CD4-positive, alpha-beta memory T cell (primary cell): ENCODE measurements at regions of chr22 and their contacts with region 1.

Region 1: GRCh38 chr22:20523086-20523983 is 15.9 kb downstream of the MED15 start:
- DNase-seq: peak; percentile 11 to 50 (median 22)
- H3K4me3 ChIP-seq: no peak overlapping the region
- H3K4me3 Mint-ChIP-seq: peak overlapping the region in 7 of 8 donors; percentile 50 to 87 (median 71)
- H3K27ac ChIP-seq: peak overlapping the region; percentile 11
- H3K27ac Mint-ChIP-seq: peak overlapping the region; percentile 77 to 97 (median 93)
- H3K4me1 ChIP-seq: peaks cover 75% of the 10 kb centered on the region
- H3K4me1 Mint-ChIP-seq: peaks cover 48 to 80% (median 64%) of the 10 kb centered on the region in 4 donors
- H3K27me3 ChIP-seq: no peaks in the 10 kb centered on the region
- H3K27me3 Mint-ChIP-seq: no peaks in the 10 kb centered on the region

Region 2: GRCh38 chr22:20130739-20131596 is 392.4 kb before region 1 on chr22:
- CTCF ChIA-PET with region 1: no interaction called
- POLR2A ChIA-PET with region 1: no interaction called
- intact Hi-C with region 1: no loop called
- DNase-seq: peak; percentile 72 to 79 (median 75)
- H3K4me3 ChIP-seq: peak overlapping the region; percentile 21 to 57
- H3K4me3 Mint-ChIP-seq: peak overlapping the region; percentile 41 to 76 (median 53)
- H3K27ac ChIP-seq: peak overlapping the region; percentile 79
- H3K27ac Mint-ChIP-seq: peak overlapping the region; percentile 31 to 88 (median 73)
- H3K4me1 ChIP-seq: peaks cover 48% of the 10 kb centered on the region
- H3K4me1 Mint-ChIP-seq: peaks cover 9 to 48% (median 35%) of the 10 kb centered on the region in 4 donors
- H3K27me3 ChIP-seq: no peaks in the 10 kb centered on the region
- H3K27me3 Mint-ChIP-seq: no peaks in the 10 kb centered on the region

Region 3: GRCh38 chr22:20405931-20406685 is 117.2 kb before region 1 on chr22:
- CTCF ChIA-PET with region 1: no interaction called
- POLR2A ChIA-PET with region 1: no interaction called
- intact Hi-C with region 1: no loop called
- DNase-seq: no peak
- H3K4me3 ChIP-seq: no peak overlapping the region
- H3K4me3 Mint-ChIP-seq: no peak overlapping the region
- H3K27ac ChIP-seq: no peak overlapping the region
- H3K27ac Mint-ChIP-seq: no peak overlapping the region
- H3K4me1 ChIP-seq: peaks cover 5% of the 10 kb centered on the region
- H3K4me1 Mint-ChIP-seq: peaks cover 5 to 11% (median 9%) of the 10 kb centered on the region in 4 donors
- H3K27me3 ChIP-seq: no peaks in the 10 kb centered on the region
- H3K27me3 Mint-ChIP-seq: no peaks in the 10 kb centered on the region

Region 4: DNA sequence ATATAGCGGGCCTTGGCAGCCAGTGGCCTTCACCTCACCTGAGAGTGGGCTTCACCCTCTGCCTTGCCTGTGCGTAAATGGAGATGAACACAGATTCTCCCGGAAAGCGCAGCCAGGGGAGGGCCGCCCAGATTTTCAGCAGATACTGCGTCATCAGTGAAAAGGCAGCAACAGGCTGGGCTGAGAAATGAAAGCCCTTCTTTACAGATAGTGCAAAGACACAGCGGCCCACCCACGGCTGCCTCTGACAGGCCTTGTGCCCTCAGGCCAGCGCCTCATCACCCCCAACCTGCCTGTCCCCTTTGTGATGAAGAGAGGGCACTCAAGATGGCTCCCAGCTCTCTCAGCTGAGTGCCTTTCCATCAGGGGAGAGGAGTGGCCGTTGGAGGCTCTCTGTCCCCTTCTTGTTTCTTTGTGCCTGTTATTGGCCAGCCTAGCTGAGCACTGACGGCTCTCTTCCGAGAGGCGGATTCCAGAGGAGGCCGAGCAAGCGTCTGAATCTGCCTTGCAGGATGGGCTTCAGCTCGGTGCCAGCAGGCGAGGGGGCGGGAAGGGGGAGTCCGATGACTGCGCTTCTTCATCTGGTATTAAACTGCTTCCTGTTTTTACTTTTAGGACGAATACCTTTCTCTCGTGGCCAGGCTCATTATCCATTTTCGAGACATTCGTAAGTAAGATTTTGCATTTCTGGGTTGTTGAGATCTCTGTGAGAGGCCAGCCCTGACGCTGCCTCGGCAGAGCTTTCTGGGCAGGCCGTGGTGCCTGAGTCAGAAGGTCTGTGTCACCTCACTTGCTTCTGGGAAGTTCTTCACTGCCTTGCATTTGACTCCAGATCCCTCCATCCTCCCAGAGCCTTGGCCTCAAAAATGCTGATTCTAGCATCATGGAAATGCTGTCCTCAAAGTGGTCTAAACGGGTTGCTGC is 27.7 kb after region 1 on chr22:
- CTCF ChIA-PET with region 1: interaction called, 3 read pairs
- POLR2A ChIA-PET with region 1: interaction called, 21 read pairs
- intact Hi-C with region 1: loop called (anchors 5 kb)
- DNase-seq: peak; percentile 45 to 73 (median 57)
- H3K4me3 ChIP-seq: peak overlapping the region; percentile 7 to 15
- H3K4me3 Mint-ChIP-seq: peak overlapping the region; percentile 84 to 89 (median 88)
- H3K27ac ChIP-seq: peak overlapping the region; percentile 75
- H3K27ac Mint-ChIP-seq: peak overlapping the region; percentile 92 to 99 (median 98)
- H3K4me1 ChIP-seq: peaks cover 91% of the 10 kb centered on the region
- H3K4me1 Mint-ChIP-seq: peaks cover 58 to 92% (median 76%) of the 10 kb centered on the region in 4 donors
- H3K27me3 ChIP-seq: no peaks in the 10 kb centered on the region
- H3K27me3 Mint-ChIP-seq: no peaks in the 10 kb centered on the region